ENCODE measurements at regions of chr6 and their contacts with region 1.

Region 1: GRCh38 chr6:123802697-123803496 is 768 bp upstream of the NKAIN2 start:
- DNase-seq: peak in 1 of 2 donors; percentile 71
- H3K4me3 ChIP-seq: peak overlapping the region; percentile 64 to 66
- H3K27ac ChIP-seq: no peak overlapping the region
- H3K4me1 ChIP-seq: peaks cover 0 to 3% of the 10 kb centered on the region in 2 donors
- H3K27me3 ChIP-seq: no peaks in the 10 kb centered on the region
- CTCF ChIP-seq: peak; percentile 33 to 86 (median 81)

Region 2: GRCh38 chr6:124854338-124854922 is 1051.5 kb after region 1 on chr6:
- intact Hi-C with region 1: loop called (anchors 5 kb)
- DNase-seq: no peak
- H3K4me3 ChIP-seq: no peak overlapping the region
- H3K27ac ChIP-seq: no peak overlapping the region
- H3K4me1 ChIP-seq: no peaks in the 10 kb centered on the region
- H3K27me3 ChIP-seq: no peaks in the 10 kb centered on the region
- CTCF ChIP-seq: no peak